Activated naive CD4-positive, alpha-beta T cell treated with anti-CD3 and anti-CD28 coated beads, Interleukin-2, amount 10 ng/mL, durations not matched to agents 7 days and 5 days (primary cell): ENCODE measurements at regions of chr3 and their contacts with region 1.

Region 1: DNA sequence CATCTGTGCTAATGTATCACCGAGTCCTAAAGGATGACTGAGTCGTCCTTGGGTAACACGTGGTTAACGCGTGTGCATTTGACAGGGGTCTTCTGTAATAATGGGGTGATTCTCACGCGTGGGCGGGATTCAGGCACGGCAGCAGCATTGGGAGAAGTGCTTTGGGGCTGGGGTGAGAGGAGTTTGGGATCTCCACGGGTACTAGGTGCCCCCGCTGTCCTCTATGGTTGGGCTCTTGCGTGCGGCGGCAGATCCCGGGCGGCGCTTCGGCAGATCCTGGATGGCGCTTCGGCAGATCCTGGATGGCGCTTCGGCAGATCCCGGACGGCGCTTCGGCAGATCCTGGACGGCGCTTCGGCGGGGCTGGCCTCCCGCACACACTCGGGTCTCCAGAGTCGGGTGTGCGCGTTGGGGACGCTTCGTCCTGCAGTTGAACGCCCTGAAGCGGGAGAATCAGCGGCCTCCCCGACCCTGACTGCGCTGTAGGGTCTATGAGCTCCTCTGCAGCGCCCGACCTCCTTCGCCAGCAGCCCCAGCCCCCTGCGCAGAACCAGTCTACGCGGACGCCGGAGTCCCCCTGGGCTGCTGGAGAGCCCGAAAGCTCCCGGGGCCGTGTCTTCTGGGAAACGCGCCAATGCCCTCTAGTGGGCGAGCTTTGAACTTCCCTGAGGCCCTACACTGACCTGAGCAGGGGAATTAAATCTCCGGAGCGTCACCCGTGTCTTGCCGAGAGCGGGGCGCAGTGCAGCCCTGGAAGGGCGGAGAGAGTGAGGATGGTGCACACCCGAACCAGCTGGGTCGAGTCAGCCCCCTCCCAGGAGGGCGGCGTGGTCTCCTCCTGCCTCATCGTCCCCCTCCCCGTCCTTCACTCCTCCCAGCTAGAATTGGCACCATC is 48.1 kb upstream of the EPHB3 start:
- DNase-seq: peak; percentile 89
- H3K4me3 Mint-ChIP-seq: peak overlapping the region; percentile 27
- H3K27ac Mint-ChIP-seq: no peak overlapping the region
- H3K4me1 Mint-ChIP-seq: peaks cover 16% of the 10 kb centered on the region
- H3K27me3 Mint-ChIP-seq: peaks cover 63% of the 10 kb centered on the region

Region 2: DNA sequence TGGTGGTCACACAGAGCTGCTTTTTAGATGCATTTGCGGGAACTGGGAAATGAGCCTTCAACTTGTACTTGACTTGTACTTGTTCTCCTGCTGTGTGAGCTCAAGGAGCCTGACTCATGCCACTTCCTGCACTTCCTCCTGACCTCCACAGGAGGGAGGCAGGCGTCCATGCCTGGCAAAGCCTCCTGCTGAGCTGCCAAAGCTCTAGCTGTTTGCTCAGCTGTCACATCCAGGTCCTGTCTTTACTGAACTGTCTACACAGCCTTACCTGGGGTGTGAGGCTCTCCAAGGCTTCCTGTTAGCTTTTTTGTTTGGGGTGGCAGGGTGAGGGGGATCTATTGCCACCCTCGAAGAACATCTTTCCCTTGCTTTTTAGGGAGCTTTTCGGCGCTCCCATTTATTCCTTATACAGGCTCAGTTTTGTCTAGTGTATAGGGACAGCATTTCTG is 141.9 kb before region 1 on chr3:
- CTCF ChIA-PET with region 1: interaction called, 76 read pairs
- DNase-seq: peak; percentile 75
- H3K4me3 Mint-ChIP-seq: no peak overlapping the region
- H3K27ac Mint-ChIP-seq: no peak overlapping the region
- H3K4me1 Mint-ChIP-seq: peaks cover 6% of the 10 kb centered on the region
- H3K27me3 Mint-ChIP-seq: peaks cover 33% of the 10 kb centered on the region

Region 3: DNA sequence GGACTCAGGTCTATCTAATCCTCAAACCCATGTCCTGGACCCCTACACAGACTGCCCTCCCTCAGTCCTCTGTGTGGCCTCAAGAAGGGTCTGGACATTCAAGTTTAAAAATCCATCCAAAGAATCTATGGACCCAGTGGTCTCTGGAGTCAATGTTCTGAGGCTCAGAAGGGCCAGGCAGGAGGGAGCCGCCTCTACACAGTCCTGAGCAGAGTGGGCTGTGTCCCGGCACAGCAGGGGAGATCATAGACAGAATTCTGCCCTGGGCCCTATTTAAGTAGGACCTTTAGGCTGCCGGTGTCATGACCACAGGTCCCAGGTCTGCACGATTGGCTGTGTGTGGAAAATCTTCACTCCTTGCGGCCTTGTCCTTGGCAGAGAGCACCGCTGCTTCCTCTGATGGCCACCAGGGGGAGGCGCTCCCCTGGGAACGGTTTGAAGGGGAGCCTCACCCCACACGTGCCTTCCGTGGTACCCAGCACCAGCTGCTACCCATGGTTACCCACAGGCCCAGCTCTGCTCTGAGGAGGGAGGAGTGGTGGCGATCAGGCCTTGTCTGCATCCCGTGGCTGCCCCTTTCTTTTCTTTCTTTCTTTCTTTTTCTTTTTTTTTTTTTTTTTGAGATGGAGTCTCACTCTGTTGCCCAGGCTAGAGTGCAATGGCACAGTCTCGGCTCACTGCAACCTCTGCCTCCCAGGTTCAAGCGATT is 95.8 kb before region 1 on chr3:
- CTCF ChIA-PET with region 1: interaction called, 15 read pairs
- DNase-seq: peak; percentile 79
- H3K4me3 Mint-ChIP-seq: no peak overlapping the region
- H3K27ac Mint-ChIP-seq: no peak overlapping the region
- H3K4me1 Mint-ChIP-seq: no peaks in the 10 kb centered on the region
- H3K27me3 Mint-ChIP-seq: peaks cover 12% of the 10 kb centered on the region

Region 4: DNA sequence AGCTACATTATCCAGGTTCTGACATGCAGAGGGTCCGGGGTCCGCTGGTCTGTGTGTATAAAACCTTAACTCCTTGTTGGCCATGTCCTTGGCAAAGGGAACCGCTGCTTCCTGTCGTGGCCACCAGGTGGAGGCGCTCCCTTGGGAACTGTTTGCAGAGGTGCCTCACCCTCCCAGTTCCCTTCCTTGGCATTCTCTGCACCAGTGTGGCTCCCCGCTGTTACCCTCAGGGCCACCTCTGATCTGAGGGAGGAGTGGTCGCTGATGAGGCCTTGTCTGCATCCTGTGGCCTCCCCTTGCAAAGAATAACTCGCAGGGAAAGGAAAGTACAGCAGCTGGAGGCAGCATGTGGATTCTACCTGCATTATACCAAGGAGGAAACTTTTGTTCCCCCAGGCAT is 44.1 kb before region 1 on chr3:
- CTCF ChIA-PET with region 1: interaction called, 24 read pairs
- DNase-seq: peak; percentile 38
- H3K4me3 Mint-ChIP-seq: no peak overlapping the region
- H3K27ac Mint-ChIP-seq: no peak overlapping the region
- H3K4me1 Mint-ChIP-seq: peaks cover 10% of the 10 kb centered on the region
- H3K27me3 Mint-ChIP-seq: peaks cover 61% of the 10 kb centered on the region

Region 5: DNA sequence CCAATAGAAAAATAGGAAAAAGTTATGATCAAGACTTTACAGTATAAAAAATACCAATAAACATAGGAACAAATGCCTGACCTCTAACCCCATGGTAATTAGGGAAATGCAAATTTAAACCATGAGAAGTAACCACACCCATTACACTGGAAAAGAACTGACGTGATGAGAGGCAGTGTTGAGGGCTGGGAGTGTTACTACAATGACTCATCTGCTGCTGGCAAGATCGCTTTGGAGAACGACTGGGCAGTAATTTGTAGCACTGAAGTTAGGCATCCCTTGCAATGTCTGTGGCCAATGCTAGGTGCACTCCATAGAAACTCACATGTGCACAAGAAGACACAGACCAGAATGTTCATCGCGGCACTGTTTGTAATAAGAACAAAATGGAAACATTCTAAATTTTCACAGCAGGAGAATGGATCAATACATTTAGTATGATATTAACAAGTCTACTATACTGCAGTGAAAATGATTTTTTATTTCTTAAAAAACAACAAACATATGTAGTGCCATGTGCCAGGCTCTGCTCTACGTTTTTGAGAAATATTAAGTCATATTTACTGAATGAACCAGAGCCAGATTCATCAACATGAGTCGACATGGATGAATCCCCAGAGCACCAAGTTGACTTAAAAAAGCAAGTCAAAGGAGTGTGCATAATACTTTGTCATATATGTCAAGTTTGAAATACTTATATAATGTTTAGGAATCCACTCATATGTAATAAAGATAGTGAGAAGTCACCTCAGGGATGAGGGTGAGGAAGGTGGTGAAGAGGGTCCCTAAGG is 10.5 kb after region 1 on chr3:
- CTCF ChIA-PET with region 1: interaction called, 15 read pairs
- DNase-seq: peak; percentile 38
- H3K4me3 Mint-ChIP-seq: no peak overlapping the region
- H3K27ac Mint-ChIP-seq: peak overlapping the region; percentile 6
- H3K4me1 Mint-ChIP-seq: peaks cover 25% of the 10 kb centered on the region
- H3K27me3 Mint-ChIP-seq: peaks cover 53% of the 10 kb centered on the region

Region 6: DNA sequence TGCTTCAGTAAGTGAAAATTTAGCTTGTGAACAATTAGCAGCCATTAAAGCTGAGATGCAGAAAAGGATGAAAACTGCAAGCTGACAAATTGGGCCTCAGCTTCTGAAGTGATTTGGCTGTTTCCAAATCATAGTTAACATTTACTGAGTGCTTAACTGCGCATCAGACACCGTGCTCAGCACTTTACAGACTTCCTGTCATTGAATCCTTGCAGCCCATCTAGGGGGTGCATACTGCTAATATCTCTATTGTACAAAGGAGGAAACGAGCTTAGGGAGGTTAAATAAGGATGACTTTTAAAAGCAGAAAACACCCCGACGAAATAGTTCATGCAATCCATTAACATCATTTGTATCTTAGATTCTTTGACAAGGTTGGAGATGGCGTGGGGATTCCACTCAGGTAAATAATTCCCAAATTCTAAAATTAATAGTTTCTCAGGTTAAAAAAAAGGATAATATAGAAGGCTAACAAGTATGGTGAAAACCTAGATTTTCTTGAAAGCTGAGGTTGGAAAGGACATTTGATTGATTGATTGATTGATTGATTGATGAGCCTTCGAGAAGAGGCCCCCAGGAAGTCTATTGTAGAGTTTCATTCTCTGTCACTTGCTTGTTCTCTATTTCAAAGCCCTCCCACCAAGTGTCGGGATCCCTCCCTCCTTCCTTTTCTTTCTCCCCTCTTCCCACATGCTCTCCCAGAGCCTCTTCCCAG is 24.5 kb after region 1 on chr3:
- CTCF ChIA-PET with region 1: interaction called, 58 read pairs
- DNase-seq: no peak
- H3K4me3 Mint-ChIP-seq: no peak overlapping the region
- H3K27ac Mint-ChIP-seq: no peak overlapping the region
- H3K4me1 Mint-ChIP-seq: no peaks in the 10 kb centered on the region
- H3K27me3 Mint-ChIP-seq: peaks cover 66% of the 10 kb centered on the region

Region 7: GRCh38 chr3:184543843-184544512 is 30.5 kb after region 1 on chr3:
- CTCF ChIA-PET with region 1: interaction called, 58 read pairs
- DNase-seq: peak; percentile 85
- H3K4me3 Mint-ChIP-seq: no peak overlapping the region
- H3K27ac Mint-ChIP-seq: no peak overlapping the region
- H3K4me1 Mint-ChIP-seq: peaks cover 9% of the 10 kb centered on the region
- H3K27me3 Mint-ChIP-seq: peaks cover 64% of the 10 kb centered on the region

Region 8: GRCh38 chr3:184592371-184593219 is 79.1 kb after region 1 on chr3:
- CTCF ChIA-PET with region 1: no interaction called
- DNase-seq: no peak
- H3K4me3 Mint-ChIP-seq: no peak overlapping the region
- H3K27ac Mint-ChIP-seq: no peak overlapping the region
- H3K4me1 Mint-ChIP-seq: no peaks in the 10 kb centered on the region
- H3K27me3 Mint-ChIP-seq: peaks cover 12% of the 10 kb centered on the region

Region 9: DNA sequence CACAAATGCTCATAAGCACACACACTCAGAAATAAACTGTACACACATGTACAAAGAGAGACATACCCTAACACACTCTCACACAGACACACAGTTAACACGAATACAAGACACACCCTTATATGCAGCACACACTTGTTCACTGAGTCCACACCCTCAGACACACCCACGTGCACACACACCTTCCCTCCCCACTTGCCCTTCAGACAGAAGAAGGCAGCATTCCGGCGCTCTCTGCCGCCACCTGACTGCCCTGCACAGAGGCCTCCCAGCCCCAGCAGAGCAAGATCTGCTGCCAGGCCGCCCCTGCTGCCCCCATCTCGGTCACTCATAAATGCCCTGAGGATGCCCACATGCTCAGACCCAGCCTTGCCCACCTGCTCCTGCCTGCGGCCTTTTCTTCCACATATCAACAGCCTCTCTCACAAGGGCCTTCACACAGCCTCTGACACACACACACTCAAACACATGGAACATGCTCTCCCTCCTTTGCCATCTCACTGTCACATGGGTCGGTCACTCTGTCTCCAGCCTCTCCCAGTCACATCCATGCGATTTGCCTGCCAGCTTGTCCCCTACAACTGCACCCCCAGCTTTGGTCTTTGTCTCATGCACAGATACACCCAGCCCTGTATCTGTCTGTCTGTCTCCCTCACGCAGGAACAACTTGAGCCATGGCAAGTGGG is 119.2 kb after region 1 on chr3:
- CTCF ChIA-PET with region 1: no interaction called
- DNase-seq: no peak
- H3K4me3 Mint-ChIP-seq: no peak overlapping the region
- H3K27ac Mint-ChIP-seq: no peak overlapping the region
- H3K4me1 Mint-ChIP-seq: peaks cover 5% of the 10 kb centered on the region
- H3K27me3 Mint-ChIP-seq: peaks cover 14% of the 10 kb centered on the region